Endothelial cell of umbilical vein (primary cell): ENCODE measurements at regions of chr21 and their contacts with region 1.

Region 1: GRCh38 chr21:46228345-46229051 is at the start of gene LSS:
- DNase-seq: peak; percentile 96
- H3K4me3 ChIP-seq: peak within 1 kb of the TSS; percentile 73 to 90 (median 81)
- H3K27ac ChIP-seq: peak within 1 kb of the TSS; percentile 1
- H3K4me1 ChIP-seq: peaks cover 22% of the 10 kb centered on the region
- H3K27me3 ChIP-seq: no peaks in the 10 kb centered on the region
- CTCF ChIP-seq: no peak
- POLR2A ChIP-seq: no peak
- total RNA-seq, gene LSS: 141 TPM in 2 replicates

Region 2: DNA sequence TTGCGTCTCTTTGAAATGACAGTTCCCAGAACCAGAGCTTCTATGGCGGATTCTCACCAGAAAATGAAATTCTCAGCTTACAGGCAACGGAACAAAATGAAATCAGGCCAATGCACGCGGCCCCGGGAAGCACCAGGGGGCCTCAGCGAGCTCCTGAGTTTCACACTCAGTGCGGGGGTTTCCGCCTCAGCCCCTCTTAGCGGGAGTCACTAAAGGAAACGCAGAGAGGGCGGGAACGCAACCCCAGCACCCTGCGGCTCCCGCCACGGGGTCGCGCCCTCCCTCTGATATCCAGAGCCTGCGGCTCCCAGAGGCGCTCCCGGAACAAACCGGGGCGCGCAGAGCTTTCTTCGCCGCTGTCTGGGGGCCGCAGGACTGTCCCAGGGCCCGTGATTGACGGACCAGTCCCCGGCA is 254.8 kb before region 1 on chr21:
- CTCF ChIA-PET with region 1: no interaction called
- POLR2A ChIA-PET with region 1: no interaction called
- dilution Hi-C with region 1: no loop called
- intact Hi-C with region 1: loop called (anchors 5 kb)
- DNase-seq: peak; percentile 77
- H3K4me3 ChIP-seq: peak overlapping the region in 2 of 3 experiments; percentile 34 to 56
- H3K27ac ChIP-seq: peak overlapping the region; percentile 35
- H3K4me1 ChIP-seq: peaks cover 29% of the 10 kb centered on the region
- H3K27me3 ChIP-seq: peaks cover 0 to 2% of the 10 kb centered on the region in 2 experiments
- CTCF ChIP-seq: peak; percentile 70 to 83
- POLR2A ChIP-seq: no peak

Region 3: GRCh38 chr21:46285761-46286496 is 57.4 kb after region 1 on chr21 and contains the start of gene YBEY:
- CTCF ChIA-PET with region 1: interaction called, 6 read pairs
- POLR2A ChIA-PET with region 1: no interaction called
- dilution Hi-C with region 1: no loop called
- intact Hi-C with region 1: loop called (anchors 2 kb)
- DNase-seq: peak; percentile 88
- H3K4me3 ChIP-seq: peak within 1 kb of the TSS; percentile 53 to 90 (median 86)
- H3K27ac ChIP-seq: peak within 1 kb of the TSS; percentile 69
- H3K4me1 ChIP-seq: peaks cover 33% of the 10 kb centered on the region
- H3K27me3 ChIP-seq: no peaks in the 10 kb centered on the region
- CTCF ChIP-seq: peak; percentile 33 to 48
- POLR2A ChIP-seq: peak; percentile 94
- total RNA-seq, gene YBEY: 6.1 and 10.5 TPM in 2 replicates